Activated B cell treated with CpG ODN at 0.5 μM for 24 hours (primary cell): ENCODE measurements at regions of chr3 and their contacts with region 1.

Region 1: DNA sequence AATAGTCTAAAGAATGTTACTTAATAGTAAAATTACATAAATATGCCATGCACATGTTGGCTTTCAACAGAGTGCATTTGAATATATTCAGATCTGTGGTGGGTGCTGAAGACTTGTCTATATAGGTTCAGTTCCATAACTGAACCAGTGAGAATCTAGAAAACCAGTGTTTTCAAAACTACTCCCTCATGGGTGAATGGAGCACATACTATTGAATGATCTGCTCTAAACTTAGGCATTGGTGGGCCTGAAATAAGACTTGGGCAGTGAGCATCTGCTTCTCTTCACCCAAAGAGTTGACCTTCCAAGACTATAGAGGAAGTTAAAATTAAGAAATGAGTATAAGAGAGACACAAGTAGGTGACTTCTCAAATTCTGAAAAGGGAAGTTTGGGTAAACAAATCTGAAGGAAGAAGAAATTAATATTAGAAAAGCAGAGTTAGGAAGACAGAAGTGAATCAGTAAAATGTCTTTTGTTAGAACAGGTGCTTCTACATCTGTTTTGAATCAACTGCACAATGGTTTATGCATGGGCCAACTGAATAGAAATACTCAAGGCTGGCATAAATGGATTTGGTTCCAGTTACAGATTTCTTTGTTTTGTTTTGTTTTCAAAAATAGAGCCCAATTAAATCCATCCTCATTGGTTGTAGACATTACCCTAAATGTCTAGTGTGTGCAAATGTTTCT is 19.3 kb downstream of the ALCAM start:
- DNase-seq: no peak
- ATAC-seq: peak; percentile 83
- H3K4me3 Mint-ChIP-seq: peak overlapping the region; percentile 7
- H3K27ac Mint-ChIP-seq: peak overlapping the region; percentile 69
- H3K4me1 Mint-ChIP-seq: peaks cover 38% of the 10 kb centered on the region
- H3K27me3 Mint-ChIP-seq: no peaks in the 10 kb centered on the region
- CTCF ChIP-seq: no peak

Region 2: GRCh38 chr3:105375750-105376511 is 10.0 kb before region 1 on chr3:
- CTCF ChIA-PET with region 1: no interaction called
- POLR2A ChIA-PET with region 1: no interaction called
- intact Hi-C with region 1: loop called (anchors 1 kb)
- DNase-seq: no peak
- ATAC-seq: no peak
- H3K4me3 Mint-ChIP-seq: no peak overlapping the region
- H3K27ac Mint-ChIP-seq: no peak overlapping the region
- H3K4me1 Mint-ChIP-seq: peaks cover 16% of the 10 kb centered on the region
- H3K27me3 Mint-ChIP-seq: no peaks in the 10 kb centered on the region
- CTCF ChIP-seq: no peak